CD4-positive, alpha-beta memory T cell (primary cell): ENCODE measurements at regions of chr19 and their contacts with region 1.

Region 1: DNA sequence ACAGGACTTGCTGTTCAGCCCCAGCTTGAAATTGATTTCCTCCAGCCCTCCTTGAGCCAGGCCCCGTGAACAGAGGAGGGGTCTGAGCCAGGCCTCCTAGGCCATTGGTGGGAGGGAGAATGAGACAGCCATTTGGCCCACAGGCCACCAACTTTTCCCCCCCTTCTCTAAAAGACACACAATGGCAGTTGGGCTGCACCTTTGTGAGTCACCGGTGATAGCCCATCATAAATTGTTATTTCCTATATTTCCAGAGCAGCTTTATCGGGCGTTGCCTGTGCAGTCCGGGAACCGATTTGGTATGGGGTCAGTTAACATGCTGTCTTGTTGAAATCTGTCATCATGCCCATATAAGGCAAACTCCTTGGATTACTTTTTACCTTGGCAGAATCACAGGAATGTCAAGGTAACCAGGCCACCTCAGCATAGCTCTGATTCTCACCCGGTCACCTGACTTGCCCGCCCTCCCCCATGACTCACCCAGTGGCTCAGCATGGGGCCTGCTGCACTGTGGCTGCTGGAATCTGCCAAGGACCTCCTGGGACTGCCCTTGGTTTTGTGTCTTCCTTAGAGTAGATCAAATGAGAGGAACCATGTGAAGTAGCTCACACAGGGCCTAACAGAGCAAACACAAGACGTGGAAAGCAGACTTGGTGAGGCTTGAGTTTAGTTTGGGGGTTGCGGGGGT is 36.1 kb downstream of the ACTN4 start:
- DNase-seq: peak in 2 of 5 donors; percentile 35 to 89
- H3K4me3 ChIP-seq: no peak overlapping the region
- H3K4me3 Mint-ChIP-seq: peak overlapping the region in 7 of 8 donors; percentile 35 to 80 (median 53)
- H3K27ac ChIP-seq: peak overlapping the region; percentile 58
- H3K27ac Mint-ChIP-seq: peak overlapping the region; percentile 89 to 97 (median 96)
- H3K4me1 ChIP-seq: peaks cover 98% of the 10 kb centered on the region
- H3K4me1 Mint-ChIP-seq: peaks cover 59 to 94% (median 79%) of the 10 kb centered on the region in 4 donors
- H3K27me3 ChIP-seq: no peaks in the 10 kb centered on the region
- H3K27me3 Mint-ChIP-seq: no peaks in the 10 kb centered on the region

Region 2: GRCh38 chr19:38658462-38659306 is 24.9 kb before region 1 on chr19:
- CTCF ChIA-PET with region 1: no interaction called
- POLR2A ChIA-PET with region 1: interaction called, 12 read pairs
- intact Hi-C with region 1: no loop called
- DNase-seq: no peak
- H3K4me3 ChIP-seq: no peak overlapping the region
- H3K4me3 Mint-ChIP-seq: peak overlapping the region in 3 of 8 donors; percentile 39 to 79 (median 46)
- H3K27ac ChIP-seq: peak overlapping the region; percentile 5
- H3K27ac Mint-ChIP-seq: peak overlapping the region in 6 of 7 donors; percentile 80 to 95 (median 92)
- H3K4me1 ChIP-seq: peaks cover 93% of the 10 kb centered on the region
- H3K4me1 Mint-ChIP-seq: peaks cover 45 to 94% (median 73%) of the 10 kb centered on the region in 4 donors
- H3K27me3 ChIP-seq: no peaks in the 10 kb centered on the region
- H3K27me3 Mint-ChIP-seq: no peaks in the 10 kb centered on the region

Region 3: GRCh38 chr19:38666663-38667511 is 16.6 kb before region 1 on chr19:
- CTCF ChIA-PET with region 1: interaction called, 8 read pairs
- POLR2A ChIA-PET with region 1: interaction called, 20 read pairs
- intact Hi-C with region 1: no loop called
- DNase-seq: peak in 3 of 5 donors; percentile 33 to 66 (median 33)
- H3K4me3 ChIP-seq: no peak overlapping the region
- H3K4me3 Mint-ChIP-seq: peak overlapping the region; percentile 75 to 92 (median 82)
- H3K27ac ChIP-seq: peak overlapping the region; percentile 44
- H3K27ac Mint-ChIP-seq: peak overlapping the region; percentile 64 to 100 (median 95)
- H3K4me1 ChIP-seq: peaks cover 99% of the 10 kb centered on the region
- H3K4me1 Mint-ChIP-seq: peaks cover 56 to 100% (median 86%) of the 10 kb centered on the region in 4 donors
- H3K27me3 ChIP-seq: no peaks in the 10 kb centered on the region
- H3K27me3 Mint-ChIP-seq: no peaks in the 10 kb centered on the region

Region 4: DNA sequence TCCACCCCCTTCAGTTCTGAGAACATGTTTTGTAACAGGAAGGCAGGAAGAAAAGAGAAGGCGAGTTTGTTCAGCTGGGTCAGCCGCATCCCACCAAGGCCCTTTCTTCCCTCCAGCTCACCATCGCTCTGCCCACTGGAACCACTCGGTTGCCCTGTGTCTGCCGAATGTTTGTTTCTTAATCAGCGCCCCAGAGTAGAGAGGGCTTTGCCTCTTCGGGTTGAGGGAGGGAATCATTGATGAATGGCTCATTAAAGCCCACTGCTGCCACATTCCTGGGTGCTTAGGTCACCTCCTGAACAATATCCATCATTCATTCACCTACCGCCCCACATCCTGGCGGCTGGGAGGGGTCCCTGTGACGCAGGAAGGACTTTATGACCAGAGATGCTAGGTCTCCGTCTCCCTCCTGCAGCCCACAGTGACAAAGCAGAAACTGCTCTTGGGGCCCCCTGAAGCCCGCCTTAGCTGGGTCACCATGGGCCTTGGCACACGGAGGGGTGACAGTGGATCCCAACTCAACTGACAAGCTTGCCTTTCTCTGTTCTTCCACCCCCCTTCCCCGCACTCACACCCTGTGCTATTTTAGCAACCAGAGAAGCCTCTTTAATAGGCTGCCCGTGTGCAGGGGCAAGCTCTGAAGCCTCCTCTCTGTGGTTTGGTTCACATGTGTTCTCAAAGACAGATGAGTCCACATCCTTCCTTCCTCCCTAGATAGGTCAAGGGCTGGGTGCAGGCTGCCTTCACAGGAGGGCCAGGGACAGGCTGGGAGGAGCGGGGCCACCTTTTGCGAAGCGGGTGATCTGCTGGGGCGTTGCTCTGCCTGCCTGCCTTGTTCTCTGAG is 10.1 kb after region 1 on chr19:
- CTCF ChIA-PET with region 1: interaction called, 5 read pairs
- POLR2A ChIA-PET with region 1: interaction called, 16 read pairs
- intact Hi-C with region 1: no loop called
- DNase-seq: peak; percentile 56 to 69 (median 65)
- H3K4me3 ChIP-seq: peak overlapping the region in 1 of 2 donors; percentile 22
- H3K4me3 Mint-ChIP-seq: peak overlapping the region; percentile 65 to 82 (median 79)
- H3K27ac ChIP-seq: peak overlapping the region; percentile 32
- H3K27ac Mint-ChIP-seq: peak overlapping the region; percentile 81 to 92 (median 88)
- H3K4me1 ChIP-seq: peaks cover 98% of the 10 kb centered on the region
- H3K4me1 Mint-ChIP-seq: peaks cover 54 to 96% (median 77%) of the 10 kb centered on the region in 4 donors
- H3K27me3 ChIP-seq: no peaks in the 10 kb centered on the region
- H3K27me3 Mint-ChIP-seq: no peaks in the 10 kb centered on the region